Activated CD8-positive, alpha-beta T cell treated with anti-CD3 and anti-CD28 coated beads for 36 hours (primary cell): ENCODE measurements at regions of chr4 and their contacts with region 1.

Region 1: DNA sequence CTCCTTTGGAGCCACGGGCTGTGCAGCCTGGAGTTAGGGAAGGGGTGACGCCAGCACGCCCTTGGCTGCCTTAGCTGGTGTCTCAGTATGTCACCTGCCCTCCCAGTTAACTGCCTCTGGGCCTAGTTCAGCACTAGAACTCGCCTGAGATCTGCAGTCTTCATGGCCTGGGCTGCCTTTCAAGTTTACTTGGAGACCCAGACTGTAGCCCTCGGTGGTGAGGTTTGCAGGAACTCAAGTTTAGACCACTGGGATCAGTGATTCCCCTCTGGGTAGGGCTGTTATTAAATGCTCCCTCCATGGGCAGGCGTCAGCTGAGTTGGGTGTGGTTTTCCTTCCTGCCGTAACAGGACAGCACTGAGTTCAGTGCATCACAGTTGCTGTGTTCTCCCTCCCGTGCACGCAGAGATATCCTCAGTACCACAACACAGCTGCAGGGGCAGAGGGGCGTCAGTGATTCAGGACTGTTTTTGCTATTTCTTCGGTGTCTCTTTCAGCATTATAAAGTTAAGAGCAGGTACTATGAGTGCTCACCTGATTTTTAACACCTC is 30.5 kb downstream of the PLAC8 start:
- DNase-seq: peak; percentile 79
- ATAC-seq: peak; percentile 96
- H3K4me3 Mint-ChIP-seq: no peak overlapping the region
- H3K27ac Mint-ChIP-seq: peak overlapping the region; percentile 61
- H3K4me1 Mint-ChIP-seq: peaks cover 27% of the 10 kb centered on the region
- H3K27me3 Mint-ChIP-seq: no peaks in the 10 kb centered on the region
- CTCF ChIP-seq: peak; percentile 48

Region 2: DNA sequence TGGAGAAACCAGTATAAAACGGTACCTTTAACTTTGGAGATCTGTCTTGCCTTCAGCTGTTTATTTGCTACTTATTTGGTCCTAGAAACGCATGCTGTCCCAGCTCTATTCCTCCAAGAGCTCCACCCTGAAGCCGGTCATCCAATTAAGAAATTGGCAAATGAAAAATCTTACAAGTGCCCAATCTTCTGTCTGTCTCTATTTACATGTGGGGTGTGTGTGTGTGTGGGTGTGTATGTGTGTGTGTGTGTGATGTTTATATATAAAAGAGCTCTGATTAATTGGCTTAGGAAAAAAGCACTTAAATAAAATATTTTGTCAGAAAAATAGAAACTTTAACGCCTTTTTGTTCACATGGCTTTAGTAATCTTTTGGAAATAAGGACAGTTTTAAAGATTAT is 13.0 kb after region 1 on chr4:
- CTCF ChIA-PET with region 1: interaction called, 23 read pairs
- POLR2A ChIA-PET with region 1: interaction called, 5 read pairs
- intact Hi-C with region 1: no loop called
- DNase-seq: no peak
- ATAC-seq: no peak
- H3K4me3 Mint-ChIP-seq: no peak overlapping the region
- H3K27ac Mint-ChIP-seq: peak overlapping the region; percentile 44
- H3K4me1 Mint-ChIP-seq: peaks cover 54% of the 10 kb centered on the region
- H3K27me3 Mint-ChIP-seq: no peaks in the 10 kb centered on the region
- CTCF ChIP-seq: no peak

Region 3: GRCh38 chr4:83252782-83253405 is 168.9 kb after region 1 on chr4:
- CTCF ChIA-PET with region 1: interaction called, 13 read pairs
- POLR2A ChIA-PET with region 1: interaction called, 3 read pairs
- intact Hi-C with region 1: no loop called
- DNase-seq: peak; percentile 84
- ATAC-seq: peak; percentile 88
- H3K4me3 Mint-ChIP-seq: no peak overlapping the region
- H3K27ac Mint-ChIP-seq: no peak overlapping the region
- H3K4me1 Mint-ChIP-seq: peaks cover 21% of the 10 kb centered on the region
- H3K27me3 Mint-ChIP-seq: no peaks in the 10 kb centered on the region
- CTCF ChIP-seq: peak; percentile 90

Region 4: GRCh38 chr4:83259586-83259985 is 175.6 kb after region 1 on chr4:
- CTCF ChIA-PET with region 1: interaction called, 14 read pairs
- POLR2A ChIA-PET with region 1: no interaction called
- intact Hi-C with region 1: no loop called
- DNase-seq: no peak
- ATAC-seq: no peak
- H3K4me3 Mint-ChIP-seq: no peak overlapping the region
- H3K27ac Mint-ChIP-seq: no peak overlapping the region
- H3K4me1 Mint-ChIP-seq: peaks cover 2% of the 10 kb centered on the region
- H3K27me3 Mint-ChIP-seq: no peaks in the 10 kb centered on the region
- CTCF ChIP-seq: no peak